ENCODE measurements at regions of chr18 and their contacts with region 1.

Region 1: DNA sequence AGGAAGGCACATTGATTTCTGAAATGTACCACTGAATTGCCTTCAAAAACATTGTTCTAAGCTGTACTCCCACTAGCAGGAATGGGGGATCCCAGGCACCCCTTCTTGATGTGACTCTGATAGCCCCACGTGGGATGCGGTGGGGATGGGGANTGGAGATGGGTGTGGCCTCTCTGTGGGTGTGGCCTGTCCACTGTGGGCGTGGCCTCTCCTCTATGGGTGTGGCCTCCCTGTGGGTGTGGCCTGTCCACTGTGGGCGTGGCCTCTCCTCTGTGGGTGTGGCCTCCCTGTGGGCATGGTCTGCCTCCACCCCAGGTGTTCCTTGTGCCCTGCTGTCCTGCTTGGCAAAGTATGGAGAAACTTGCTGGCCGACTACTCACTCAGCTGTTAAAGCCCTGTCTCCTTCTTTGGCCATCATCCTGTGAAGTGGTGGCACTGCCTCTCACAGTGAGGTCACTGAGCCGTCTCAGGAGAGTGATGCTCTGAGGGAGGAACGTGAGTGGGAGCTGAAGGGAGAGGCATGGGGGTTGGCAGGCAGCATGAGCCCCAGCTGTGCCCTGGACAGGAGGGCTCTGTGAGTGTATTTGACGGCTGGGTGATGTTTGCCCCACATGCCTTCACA is 6.7 kb upstream of the PARD6G start:
- DNase-seq: no peak
- H3K4me3 Mint-ChIP-seq: no peak overlapping the region
- H3K27ac Mint-ChIP-seq: no peak overlapping the region
- H3K4me1 Mint-ChIP-seq: no peaks in the 10 kb centered on the region
- H3K27me3 Mint-ChIP-seq: peaks cover 9% of the 10 kb centered on the region

Region 2: DNA sequence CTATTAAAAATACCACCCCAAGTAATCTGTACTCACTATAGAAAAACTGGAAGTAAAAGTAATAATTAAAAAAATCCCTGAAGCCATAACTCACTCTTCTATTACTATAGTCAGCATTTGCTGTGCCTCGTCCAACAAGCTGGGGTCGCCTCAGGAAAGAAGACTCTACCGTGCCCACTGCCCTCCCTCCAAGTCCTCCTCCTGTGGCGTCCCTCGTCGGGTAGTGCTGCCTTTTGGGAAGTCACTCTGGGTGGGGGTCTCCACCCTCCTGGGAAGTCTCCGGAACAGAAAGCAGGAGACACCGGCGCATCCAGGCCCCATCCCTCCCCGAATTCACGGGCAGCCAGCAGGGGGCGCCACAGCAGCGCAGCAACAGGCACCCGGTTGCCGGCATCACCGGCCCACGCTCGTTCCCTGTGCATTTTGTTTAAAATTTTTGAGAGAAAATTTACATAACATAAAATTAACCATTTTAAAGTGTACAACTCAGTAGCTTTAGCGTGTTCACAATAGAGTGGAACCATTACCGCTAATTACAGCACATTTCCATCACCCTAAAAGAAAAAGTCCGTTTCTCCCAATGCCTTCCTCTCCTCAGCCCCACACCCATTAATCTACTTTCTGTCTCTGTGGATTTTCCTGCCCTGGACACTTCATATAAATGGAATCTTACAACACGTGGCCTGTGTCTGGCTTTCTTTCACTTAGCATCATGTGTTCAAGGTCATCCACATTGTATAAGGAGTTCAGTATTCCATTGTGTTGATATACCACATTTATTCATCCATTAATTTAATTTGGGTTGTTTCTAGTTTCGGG is 82.7 kb before region 1 on chr18:
- CTCF ChIA-PET with region 1: interaction called, 7 read pairs
- intact Hi-C with region 1: loop called (anchors 1 kb)
- DNase-seq: peak; percentile 67
- H3K4me3 Mint-ChIP-seq: no peak overlapping the region
- H3K27ac Mint-ChIP-seq: no peak overlapping the region
- H3K4me1 Mint-ChIP-seq: peaks cover 6% of the 10 kb centered on the region
- H3K27me3 Mint-ChIP-seq: peaks cover 45% of the 10 kb centered on the region